ENCODE measurements at regions of chr13 and their contacts with region 1.

Region 1: DNA sequence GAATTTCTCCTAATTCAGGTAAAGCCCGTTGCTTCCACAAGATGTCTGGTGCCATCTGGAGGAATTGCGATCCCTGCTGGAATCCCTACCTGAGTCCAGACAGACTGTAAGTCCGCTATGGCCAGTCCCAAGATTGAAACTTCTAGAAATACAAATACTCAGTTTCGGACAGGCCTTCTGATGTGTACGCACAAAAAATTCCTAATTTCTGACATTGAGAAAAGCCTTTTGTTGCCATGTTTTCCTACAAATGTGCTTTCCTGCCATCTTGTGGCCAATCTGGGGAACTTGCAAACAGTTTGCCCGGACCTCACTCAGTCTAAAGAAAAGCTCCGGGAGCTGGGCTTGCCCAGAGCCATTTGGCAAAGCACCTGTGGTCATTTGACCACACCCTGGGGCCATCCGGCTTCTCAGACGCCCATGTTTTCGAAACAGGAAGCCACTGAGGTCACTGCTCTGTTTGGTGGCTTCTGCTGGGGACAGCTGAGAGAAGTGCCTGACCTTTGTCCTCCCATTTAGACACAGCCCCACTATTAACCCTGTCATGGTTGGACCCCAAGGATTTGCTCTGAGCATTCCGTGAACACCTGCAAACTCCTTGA is 79.4 kb downstream of the SLC15A1 start:
- DNase-seq: peak; percentile 48
- H3K4me3 ChIP-seq: no peak overlapping the region
- H3K27ac ChIP-seq: no peak overlapping the region
- H3K4me1 ChIP-seq: peaks cover 4% of the 10 kb centered on the region
- H3K27me3 ChIP-seq: no peaks in the 10 kb centered on the region
- CTCF ChIP-seq: peak; percentile 84 to 87

Region 2: GRCh38 chr13:98033277-98034247 is 639.5 kb before region 1 on chr13:
- CTCF ChIA-PET with region 1: interaction called, 5 read pairs
- dilution Hi-C with region 1: no loop called
- in situ Hi-C with region 1: no loop called
- intact Hi-C with region 1: loop called (anchors 1 kb)
- DNase-seq: peak; percentile 33
- H3K4me3 ChIP-seq: no peak overlapping the region
- H3K27ac ChIP-seq: no peak overlapping the region
- H3K4me1 ChIP-seq: no peaks in the 10 kb centered on the region
- H3K27me3 ChIP-seq: no peaks in the 10 kb centered on the region
- CTCF ChIP-seq: peak; percentile 9 to 42

Region 3: GRCh38 chr13:98325724-98326123 is 347.3 kb before region 1 on chr13:
- CTCF ChIA-PET with region 1: interaction called, 12 read pairs
- dilution Hi-C with region 1: no loop called
- in situ Hi-C with region 1: no loop called
- intact Hi-C with region 1: no loop called
- DNase-seq: no peak
- H3K4me3 ChIP-seq: no peak overlapping the region
- H3K27ac ChIP-seq: no peak overlapping the region
- H3K4me1 ChIP-seq: no peaks in the 10 kb centered on the region
- H3K27me3 ChIP-seq: no peaks in the 10 kb centered on the region
- CTCF ChIP-seq: no peak

Region 4: GRCh38 chr13:98445340-98446233 is 227.5 kb before region 1 on chr13:
- CTCF ChIA-PET with region 1: interaction called, 6 read pairs
- dilution Hi-C with region 1: no loop called
- in situ Hi-C with region 1: no loop called
- intact Hi-C with region 1: loop called (anchors 1 kb)
- DNase-seq: peak; percentile 50
- H3K4me3 ChIP-seq: no peak overlapping the region
- H3K27ac ChIP-seq: no peak overlapping the region
- H3K4me1 ChIP-seq: peaks cover 24% of the 10 kb centered on the region
- H3K27me3 ChIP-seq: no peaks in the 10 kb centered on the region
- CTCF ChIP-seq: peak; percentile 86 to 97

Region 5: GRCh38 chr13:98761986-98762616 is 89.1 kb after region 1 on chr13:
- CTCF ChIA-PET with region 1: no interaction called
- dilution Hi-C with region 1: no loop called
- in situ Hi-C with region 1: no loop called
- intact Hi-C with region 1: no loop called
- DNase-seq: no peak
- H3K4me3 ChIP-seq: no peak overlapping the region
- H3K27ac ChIP-seq: no peak overlapping the region
- H3K4me1 ChIP-seq: no peaks in the 10 kb centered on the region
- H3K27me3 ChIP-seq: no peaks in the 10 kb centered on the region
- CTCF ChIP-seq: no peak

Region 6: GRCh38 chr13:98842864-98843481 is 169.9 kb after region 1 on chr13:
- CTCF ChIA-PET with region 1: interaction called, 6 read pairs
- dilution Hi-C with region 1: no loop called
- in situ Hi-C with region 1: no loop called
- intact Hi-C with region 1: loop called (anchors 1 kb)
- DNase-seq: peak; percentile 48
- H3K4me3 ChIP-seq: no peak overlapping the region
- H3K27ac ChIP-seq: no peak overlapping the region
- H3K4me1 ChIP-seq: peaks cover 6% of the 10 kb centered on the region
- H3K27me3 ChIP-seq: no peaks in the 10 kb centered on the region
- CTCF ChIP-seq: peak; percentile 88 to 91

Region 7: DNA sequence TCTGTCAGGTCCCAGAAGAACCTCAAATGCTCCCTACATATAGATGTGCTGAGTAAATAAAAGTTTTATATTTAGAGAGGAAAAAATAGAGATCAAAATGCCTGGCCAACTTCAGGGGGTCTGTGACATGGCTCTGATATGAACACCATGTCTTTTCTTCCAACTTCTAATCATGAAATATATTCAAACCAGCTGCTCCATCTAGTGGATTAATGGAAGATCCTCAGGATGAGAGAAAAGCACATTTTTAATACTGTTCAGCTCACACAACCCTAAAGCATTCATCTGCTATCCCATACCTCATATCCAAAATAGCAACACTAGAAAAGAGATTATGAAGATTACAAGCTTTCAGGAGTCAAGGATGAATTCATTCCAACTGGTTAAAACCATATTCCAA is 360.8 kb after region 1 on chr13:
- CTCF ChIA-PET with region 1: no interaction called
- dilution Hi-C with region 1: no loop called
- in situ Hi-C with region 1: no loop called
- intact Hi-C with region 1: loop called (anchors 5 kb)
- DNase-seq: peak; percentile 16
- H3K4me3 ChIP-seq: no peak overlapping the region
- H3K27ac ChIP-seq: no peak overlapping the region
- H3K4me1 ChIP-seq: peaks cover 17% of the 10 kb centered on the region
- H3K27me3 ChIP-seq: no peaks in the 10 kb centered on the region
- CTCF ChIP-seq: peak; percentile 60 to 66

Measured in mammary epithelial cell (primary cell).